Heart left ventricle (tissue), 16 donors: ENCODE measurements at regions of chr18 and their contacts with region 1.

Region 1: DNA sequence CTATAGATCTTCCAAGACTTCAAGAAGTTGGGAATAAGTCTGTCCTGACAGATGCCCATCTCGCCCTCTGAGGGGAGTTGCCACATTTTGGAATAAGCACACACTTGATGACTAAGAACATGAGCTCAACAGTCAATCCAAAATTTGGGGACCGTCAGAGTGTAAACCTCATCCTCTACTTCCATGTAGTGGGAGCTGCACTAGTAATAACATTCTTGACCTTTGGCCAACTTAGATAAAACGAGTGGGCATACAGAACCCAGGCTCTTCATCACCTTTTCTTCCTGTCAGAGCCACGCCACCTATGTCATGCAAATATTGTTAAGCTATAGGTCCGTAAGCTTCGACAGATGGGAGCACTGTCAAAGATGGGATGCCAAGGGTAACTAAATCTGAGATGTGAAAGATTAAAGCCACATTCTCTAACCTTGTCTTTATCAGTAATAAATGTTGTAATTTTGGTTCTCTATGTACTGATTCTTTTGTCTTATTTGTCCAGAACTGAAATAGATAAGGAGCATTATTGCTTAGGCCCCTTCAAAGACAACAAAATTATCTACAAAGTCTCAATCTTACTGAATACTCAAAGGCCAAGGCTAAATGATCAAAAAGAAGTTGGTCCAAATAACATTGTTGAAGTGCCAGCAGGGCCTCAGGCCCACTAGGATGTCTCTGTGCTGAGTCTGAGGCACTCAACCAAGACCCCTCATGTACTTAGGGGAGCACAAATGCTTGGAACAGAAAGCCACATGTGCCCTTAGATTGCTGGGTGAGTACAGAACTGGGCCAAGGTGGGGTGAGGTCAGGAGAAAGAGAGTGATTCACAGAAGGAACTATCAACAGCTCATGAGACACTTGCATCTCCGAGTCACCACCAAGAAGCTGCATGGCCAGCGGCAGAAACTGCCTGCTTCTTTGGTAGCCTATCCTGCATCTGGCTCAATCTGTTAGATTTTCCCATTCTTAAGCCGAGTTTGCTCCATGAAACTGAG is 15.0 kb downstream of the CDH2 start:
- DNase-seq: no peak
- ATAC-seq: peak in 3 of 4 donors; percentile 31 to 44 (median 39)
- H3K4me3 ChIP-seq: no peak overlapping the region
- H3K27ac ChIP-seq: peak overlapping the region in 10 of 12 donors; percentile 12 to 84 (median 59)
- H3K4me1 ChIP-seq: peaks cover 0 to 91% (median 32%) of the 10 kb centered on the region in 12 donors
- H3K27me3 ChIP-seq: no peaks in the 10 kb centered on the region
- CTCF ChIP-seq: no peak
- POLR2A ChIP-seq: no peak

Region 2: GRCh38 chr18:27778441-27778840 is 383.5 kb before region 1 on chr18:
- intact Hi-C with region 1: loop called in 1 of 10 experiments (anchors 5 kb)
- DNase-seq: no peak
- ATAC-seq: peak in 3 of 4 donors; percentile 72 to 75 (median 72)
- H3K4me3 ChIP-seq: no peak overlapping the region
- H3K27ac ChIP-seq: no peak overlapping the region
- H3K4me1 ChIP-seq: no peaks in the 10 kb centered on the region
- H3K27me3 ChIP-seq: no peaks in the 10 kb centered on the region
- CTCF ChIP-seq: peak; percentile 16 to 60 (median 46)
- POLR2A ChIP-seq: no peak

Region 3: GRCh38 chr18:28019425-28020108 is 142.3 kb before region 1 on chr18:
- intact Hi-C with region 1: no loop called
- DNase-seq: no peak
- ATAC-seq: peak in 1 of 4 donors; percentile 26
- H3K4me3 ChIP-seq: no peak overlapping the region
- H3K27ac ChIP-seq: no peak overlapping the region
- H3K4me1 ChIP-seq: peaks cover 0 to 7% (median 0%) of the 10 kb centered on the region in 12 donors
- H3K27me3 ChIP-seq: no peaks in the 10 kb centered on the region
- CTCF ChIP-seq: no peak
- POLR2A ChIP-seq: no peak

Region 4: GRCh38 chr18:28115149-28115550 is 46.8 kb before region 1 on chr18:
- intact Hi-C with region 1: loop called in 2 of 10 experiments (anchors 10 kb)
- DNase-seq: no peak
- ATAC-seq: no peak
- H3K4me3 ChIP-seq: no peak overlapping the region
- H3K27ac ChIP-seq: peak overlapping the region in 10 of 12 donors; percentile 15 to 97 (median 86)
- H3K4me1 ChIP-seq: peaks cover 0 to 69% (median 17%) of the 10 kb centered on the region in 12 donors
- H3K27me3 ChIP-seq: no peaks in the 10 kb centered on the region
- CTCF ChIP-seq: no peak
- POLR2A ChIP-seq: no peak

Region 5: GRCh38 chr18:28127763-28128663 is 33.9 kb before region 1 on chr18:
- intact Hi-C with region 1: loop called in 1 of 10 experiments (anchors 5 kb)
- DNase-seq: no peak
- ATAC-seq: peak in 3 of 4 donors; percentile 10 to 44 (median 16)
- H3K4me3 ChIP-seq: no peak overlapping the region
- H3K27ac ChIP-seq: peak overlapping the region; percentile 50 to 97 (median 76)
- H3K4me1 ChIP-seq: peaks cover 0 to 76% (median 13%) of the 10 kb centered on the region in 12 donors
- H3K27me3 ChIP-seq: no peaks in the 10 kb centered on the region
- CTCF ChIP-seq: no peak
- POLR2A ChIP-seq: no peak